ENCODE measurements at regions of chr3 and their contacts with region 1.

Region 1: DNA sequence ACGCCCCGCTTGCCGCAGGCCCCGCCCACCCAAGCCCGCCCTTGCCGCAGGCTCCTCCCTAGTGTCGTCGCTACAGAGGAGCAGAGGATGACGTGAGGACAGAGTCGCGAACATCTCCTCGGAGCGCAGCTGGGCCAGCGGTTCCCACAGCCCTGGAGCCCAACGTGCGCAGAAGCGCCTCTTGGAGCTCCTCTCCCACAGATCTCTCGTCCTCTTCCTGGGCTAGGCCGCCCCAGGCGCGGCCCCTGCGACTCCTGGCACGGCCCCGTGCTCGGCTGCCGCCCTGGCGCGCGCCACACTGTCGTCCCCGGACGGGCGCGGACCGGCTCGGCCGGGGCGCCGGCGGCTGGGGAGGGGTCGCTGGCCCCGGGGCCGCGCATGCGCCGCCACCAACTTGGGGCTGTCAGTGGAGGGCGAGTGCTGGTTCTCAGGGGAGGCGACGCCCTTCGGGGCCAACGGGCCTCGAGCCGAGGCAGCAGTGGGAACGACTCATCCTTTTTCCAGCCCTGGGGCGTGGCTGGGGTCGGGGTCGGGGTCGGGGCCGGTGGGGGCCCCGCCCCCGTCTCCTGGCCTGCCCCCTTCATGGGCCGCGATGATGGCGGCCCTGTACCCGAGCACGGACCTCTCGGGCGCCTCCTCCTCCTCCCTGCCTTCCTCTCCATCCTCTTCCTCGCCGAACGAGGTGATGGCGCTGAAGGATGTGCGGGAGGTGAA is at the start of gene TRPC1:
- DNase-seq: peak; percentile 88
- H3K4me3 ChIP-seq: peak within 1 kb of the TSS; percentile 81 to 99 (median 84)
- H3K27ac ChIP-seq: peak within 1 kb of the TSS; percentile 91 to 95 (median 92)
- H3K4me1 ChIP-seq: peaks cover 0 to 18% (median 5%) of the 10 kb centered on the region in 4 donors
- H3K27me3 ChIP-seq: no peaks in the 10 kb centered on the region
- CTCF ChIP-seq: no peak
- EP300 ChIP-seq: no peak
- POLR2A ChIP-seq: peak in 1 of 2 donors; percentile 47
- total RNA-seq, gene TRPC1: 21.4 to 31.0 (median 25.5) TPM

Region 2: DNA sequence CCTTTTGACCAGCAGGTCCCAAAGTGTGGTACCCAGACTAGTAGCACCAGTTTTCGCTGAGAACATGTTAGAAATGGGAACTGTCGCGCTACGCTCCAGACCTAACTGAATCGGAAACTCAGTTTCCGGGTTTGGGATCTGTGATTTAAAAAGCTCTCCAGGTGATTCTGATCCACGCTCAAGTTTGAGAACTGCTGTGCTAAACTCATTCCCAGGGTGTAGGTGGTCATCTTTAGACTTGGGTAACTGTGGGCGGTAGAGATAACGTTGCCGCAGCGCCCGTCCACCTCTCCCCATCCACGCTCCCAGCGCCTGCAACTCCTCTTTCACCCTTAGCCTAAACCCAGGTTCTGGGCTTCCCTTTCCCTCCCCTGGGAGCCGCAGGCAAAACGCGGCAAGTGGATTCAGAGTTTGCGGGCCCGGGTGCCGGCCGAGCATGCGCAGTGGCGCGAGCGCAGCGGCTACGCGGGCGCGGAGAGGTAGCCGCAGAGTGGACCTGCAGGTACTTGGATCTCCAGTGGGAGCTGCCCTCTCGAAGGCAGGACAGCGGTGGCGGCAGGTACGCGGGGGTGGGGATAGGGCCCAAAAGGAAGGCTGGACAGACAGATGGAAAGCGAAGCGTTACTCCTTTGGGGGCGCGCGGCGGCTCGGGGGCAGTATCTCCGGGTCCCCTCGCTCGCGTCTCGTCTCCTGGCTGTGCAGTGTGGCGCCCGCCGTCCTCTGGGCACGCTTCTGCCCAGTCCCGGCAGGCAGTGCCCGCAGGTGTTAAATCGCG is 128.0 kb before region 1 on chr3 and contains the start of gene PLS1:
- intact Hi-C with region 1: loop called (anchors 5 kb)
- DNase-seq: peak; percentile 92
- H3K4me3 ChIP-seq: peak within 1 kb of the TSS; percentile 44 to 64 (median 60)
- H3K27ac ChIP-seq: peak within 1 kb of the TSS; percentile 26 to 73 (median 36)
- H3K4me1 ChIP-seq: peaks cover 0 to 13% (median 9%) of the 10 kb centered on the region in 4 donors
- H3K27me3 ChIP-seq: no peaks in the 10 kb centered on the region
- CTCF ChIP-seq: no peak
- EP300 ChIP-seq: peak in 1 of 4 donors; percentile 18
- POLR2A ChIP-seq: peak in 1 of 2 donors; percentile 68
- total RNA-seq, gene PLS1: 0.55 to 1.8 (median 0.92) TPM

Region 3: DNA sequence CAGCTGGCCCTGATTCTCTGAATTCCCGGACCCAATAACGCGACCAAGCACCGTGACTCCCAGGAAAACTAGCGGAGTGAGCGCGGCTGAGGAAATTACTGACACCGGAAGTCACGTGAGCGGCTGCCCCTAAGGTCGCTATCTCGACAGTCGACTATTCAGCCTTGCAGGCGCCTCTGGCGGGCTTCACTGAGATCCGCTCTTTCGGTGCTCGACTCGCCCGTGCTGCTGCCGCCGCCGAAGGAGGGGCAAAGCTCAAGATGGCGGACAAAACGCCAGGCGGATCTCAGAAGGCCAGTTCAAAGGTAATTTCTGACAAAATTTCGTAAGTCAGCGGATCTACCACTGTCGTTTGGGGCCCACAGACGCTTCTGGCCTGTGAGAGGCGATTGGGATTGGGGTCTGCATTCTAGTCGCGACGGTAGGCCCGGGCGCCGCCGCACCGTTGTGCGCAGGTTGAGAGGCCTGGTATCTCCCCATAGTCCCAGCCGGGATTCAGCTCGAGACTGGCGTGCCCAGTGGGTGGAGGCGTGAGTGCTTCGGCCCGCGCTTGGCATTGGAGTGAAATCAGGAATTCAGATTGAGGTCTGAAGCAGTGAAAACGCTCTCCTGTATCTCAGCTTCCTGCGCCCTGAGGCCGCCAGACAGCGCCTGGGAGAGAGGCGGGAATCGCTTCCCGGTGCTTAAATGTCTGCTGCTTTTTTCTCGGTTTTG is 277.4 kb after region 1 on chr3 and contains the start of gene U2SURP:
- intact Hi-C with region 1: loop called (anchors 5 kb)
- DNase-seq: peak; percentile 98
- H3K4me3 ChIP-seq: peak within 1 kb of the TSS; percentile 64 to 95 (median 94)
- H3K27ac ChIP-seq: peak within 1 kb of the TSS; percentile 91 to 95 (median 92)
- H3K4me1 ChIP-seq: peaks cover 0 to 49% (median 35%) of the 10 kb centered on the region in 4 donors
- H3K27me3 ChIP-seq: no peaks in the 10 kb centered on the region
- CTCF ChIP-seq: no peak
- EP300 ChIP-seq: peak in 2 of 4 donors; percentile 13 to 78
- POLR2A ChIP-seq: peak in 1 of 2 donors; percentile 26
- total RNA-seq, gene U2SURP: 66.8 to 79.8 (median 68.0) TPM

Measured in sigmoid colon (tissue), 7 donors.